Activated CD4-positive, alpha-beta T cell treated with anti-CD3 and anti-CD28 coated beads, Interleukin-2, amount 10 ng/mL, durations not matched to agents 24 days and 14 days (primary cell): ENCODE measurements at regions of chr13 and their contacts with region 1.

Region 1: DNA sequence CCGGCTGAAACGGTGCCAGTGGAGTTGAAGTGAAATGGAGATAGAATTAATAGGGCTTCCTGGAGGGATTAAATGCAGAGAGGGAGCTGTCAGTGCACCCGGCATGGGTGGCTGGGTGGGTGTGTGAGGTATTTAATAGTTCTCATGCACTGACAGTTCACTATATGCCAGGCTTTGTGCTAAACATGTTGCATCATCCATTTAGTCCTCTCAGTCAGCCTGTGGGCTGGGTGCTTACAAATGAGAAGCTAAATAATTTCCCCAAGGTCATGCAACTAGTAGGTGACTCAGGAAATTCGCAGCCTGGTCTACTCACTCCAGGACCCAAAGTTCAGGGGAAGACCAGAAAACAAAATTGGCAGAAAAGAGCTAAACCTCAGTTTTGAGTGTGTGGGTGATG is 63.5 kb upstream of the SPATA13 start:
- DNase-seq: peak; percentile 74
- H3K4me3 Mint-ChIP-seq: peak overlapping the region; percentile 71
- H3K27ac Mint-ChIP-seq: peak overlapping the region; percentile 92
- H3K4me1 Mint-ChIP-seq: peaks cover 17% of the 10 kb centered on the region
- H3K27me3 Mint-ChIP-seq: peaks cover 29% of the 10 kb centered on the region

Region 2: DNA sequence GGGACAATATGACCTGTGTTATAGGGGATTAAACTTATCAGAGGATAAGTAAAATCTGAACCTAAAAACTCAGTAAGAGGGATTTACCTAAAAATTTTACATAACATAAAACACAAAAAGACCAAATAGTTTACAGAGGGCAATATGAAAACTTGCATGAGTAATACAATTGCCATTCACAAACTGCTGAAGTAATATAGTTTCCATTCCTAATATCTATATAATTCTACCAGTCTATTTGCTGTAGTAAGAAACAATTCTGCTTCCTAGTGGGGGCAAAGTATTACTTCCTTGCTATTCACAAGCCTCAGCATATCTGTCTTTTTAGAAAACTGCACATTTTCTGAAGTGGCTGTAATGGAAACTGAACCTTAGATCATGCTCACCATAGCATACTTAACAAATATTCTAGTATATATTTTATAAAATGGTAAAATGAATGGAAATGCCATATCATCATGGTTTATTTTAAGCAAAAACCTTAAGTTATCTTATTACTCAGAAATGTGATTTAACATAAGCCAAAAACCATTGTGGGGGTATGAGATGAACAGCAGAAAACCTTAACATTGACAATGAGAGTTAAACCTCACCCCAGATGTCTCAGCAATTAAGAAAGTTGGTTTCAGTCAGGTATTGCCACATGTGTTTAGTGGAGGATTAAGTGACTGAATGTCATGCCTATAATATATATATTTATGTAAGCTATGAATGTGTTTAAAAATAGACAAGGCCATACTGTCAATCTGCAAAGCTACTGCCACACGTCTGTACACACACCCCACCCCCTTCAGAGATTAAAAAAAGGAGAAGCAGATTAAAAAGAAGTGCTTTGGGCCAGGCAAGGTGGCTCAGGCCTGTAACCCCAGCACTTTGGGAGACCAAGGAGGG is 344.7 kb before region 1 on chr13:
- intact Hi-C with region 1: loop called (anchors 2 kb)
- DNase-seq: no peak
- H3K4me3 Mint-ChIP-seq: no peak overlapping the region
- H3K27ac Mint-ChIP-seq: peak overlapping the region; percentile 46
- H3K4me1 Mint-ChIP-seq: peaks cover 30% of the 10 kb centered on the region
- H3K27me3 Mint-ChIP-seq: peaks cover 2% of the 10 kb centered on the region

Region 3: GRCh38 chr13:24053519-24054251 is 43.4 kb before region 1 on chr13:
- intact Hi-C with region 1: loop called (anchors 2 kb)
- DNase-seq: peak; percentile 89
- H3K4me3 Mint-ChIP-seq: no peak overlapping the region
- H3K27ac Mint-ChIP-seq: no peak overlapping the region
- H3K4me1 Mint-ChIP-seq: peaks cover 11% of the 10 kb centered on the region
- H3K27me3 Mint-ChIP-seq: peaks cover 19% of the 10 kb centered on the region

Region 4: DNA sequence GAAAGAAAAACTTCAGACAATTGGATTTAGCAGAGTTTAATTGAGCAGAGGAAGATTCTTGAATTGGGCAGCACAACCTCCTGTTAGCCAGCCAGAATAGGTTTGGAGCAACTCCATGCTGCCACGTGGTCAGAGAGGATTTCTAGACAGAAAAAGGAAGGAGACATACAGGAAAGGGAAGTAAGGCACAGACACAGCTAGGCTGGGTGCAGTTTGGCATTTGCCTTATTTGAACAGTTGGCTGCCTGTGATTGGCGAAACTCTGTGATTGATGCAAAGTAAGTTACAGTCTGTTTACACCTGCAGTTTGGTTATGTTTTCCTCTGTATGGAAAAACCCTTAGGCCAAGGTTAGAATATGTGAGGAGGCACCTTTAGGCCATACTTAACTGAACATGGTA is 22.4 kb before region 1 on chr13:
- intact Hi-C with region 1: no loop called
- DNase-seq: no peak
- H3K4me3 Mint-ChIP-seq: no peak overlapping the region
- H3K27ac Mint-ChIP-seq: no peak overlapping the region
- H3K4me1 Mint-ChIP-seq: peaks cover 4% of the 10 kb centered on the region
- H3K27me3 Mint-ChIP-seq: peaks cover 18% of the 10 kb centered on the region

Region 5: GRCh38 chr13:24160454-24161009 is 63.5 kb after region 1 on chr13 and contains the start of gene SPATA13:
- intact Hi-C with region 1: loop called (anchors 1 kb)
- DNase-seq: peak; percentile 97
- H3K4me3 Mint-ChIP-seq: peak within 1 kb of the TSS; percentile 95
- H3K27ac Mint-ChIP-seq: peak within 1 kb of the TSS; percentile 90
- H3K4me1 Mint-ChIP-seq: peaks cover 21% of the 10 kb centered on the region
- H3K27me3 Mint-ChIP-seq: peaks cover 27% of the 10 kb centered on the region
- total RNA-seq, gene SPATA13: 41.9 and 43.6 TPM in 2 replicates

Region 6: GRCh38 chr13:24187185-24187584 is 90.1 kb after region 1 on chr13:
- intact Hi-C with region 1: loop called (anchors 1 kb)
- DNase-seq: no peak
- H3K4me3 Mint-ChIP-seq: no peak overlapping the region
- H3K27ac Mint-ChIP-seq: peak overlapping the region; percentile 78
- H3K4me1 Mint-ChIP-seq: peaks cover 39% of the 10 kb centered on the region
- H3K27me3 Mint-ChIP-seq: no peaks in the 10 kb centered on the region

Region 7: GRCh38 chr13:24228852-24229458 is 131.9 kb after region 1 on chr13:
- intact Hi-C with region 1: loop called (anchors 5 kb)
- DNase-seq: peak; percentile 82
- H3K4me3 Mint-ChIP-seq: no peak overlapping the region
- H3K27ac Mint-ChIP-seq: peak overlapping the region; percentile 10
- H3K4me1 Mint-ChIP-seq: peaks cover 48% of the 10 kb centered on the region
- H3K27me3 Mint-ChIP-seq: no peaks in the 10 kb centered on the region